Activated CD8-positive, alpha-beta T cell treated with anti-CD3 and anti-CD28 coated beads, Interleukin-2, amount 10 ng/mL, durations not matched to agents 7 days and 5 days (primary cell): ENCODE measurements at regions of chr1 and their contacts with region 1.

Region 1: DNA sequence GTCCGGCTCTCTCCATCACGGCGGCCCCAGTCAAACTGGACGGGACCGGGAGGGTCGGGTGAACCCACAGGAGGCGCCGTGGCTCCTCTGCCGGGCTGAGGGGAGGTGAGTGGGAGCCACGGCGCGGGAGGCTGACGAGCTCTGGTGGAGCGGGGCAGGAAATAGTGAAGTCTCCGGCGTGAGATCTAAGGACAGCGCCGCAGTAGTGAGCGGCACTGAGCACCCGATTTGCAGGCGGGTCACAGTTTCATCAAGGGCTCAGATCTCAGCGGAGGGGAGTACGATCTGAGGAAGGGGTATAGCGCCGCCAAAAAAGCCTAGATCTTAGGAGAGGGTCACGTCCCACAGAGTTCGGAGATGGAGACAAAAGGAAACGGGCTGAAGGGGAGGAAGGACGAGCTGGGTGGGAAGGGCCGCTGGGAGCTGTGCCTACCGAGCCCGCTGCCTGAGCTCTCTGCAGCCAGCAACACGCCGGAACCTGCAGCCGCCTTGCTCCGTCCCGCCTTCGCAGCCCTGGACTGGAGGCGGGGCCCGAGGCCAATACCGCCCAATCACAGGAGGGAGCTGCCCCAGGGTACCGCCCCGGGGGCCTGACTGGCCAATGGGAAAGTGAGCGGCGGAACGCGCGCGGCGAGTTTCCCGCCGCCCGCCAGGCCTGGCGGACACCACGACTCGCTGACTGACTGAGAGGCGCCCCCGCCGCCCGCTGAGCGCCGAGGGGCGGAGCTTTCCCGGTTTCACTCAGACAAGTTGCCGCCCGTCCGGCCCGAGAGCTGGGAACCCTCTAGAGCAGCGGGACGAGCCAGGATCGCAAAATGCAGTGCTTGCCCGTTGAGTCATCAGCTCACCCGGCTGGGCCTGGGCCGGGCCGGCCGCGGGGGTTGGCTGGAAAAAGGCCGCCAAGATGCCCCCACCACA is 1.9 kb downstream of the SFN start:
- DNase-seq: peak; percentile 96
- ATAC-seq: peak; percentile 97
- H3K4me3 Mint-ChIP-seq: peak overlapping the region; percentile 94
- H3K27ac Mint-ChIP-seq: peak overlapping the region; percentile 97
- H3K4me1 Mint-ChIP-seq: peaks cover 40% of the 10 kb centered on the region
- H3K27me3 Mint-ChIP-seq: no peaks in the 10 kb centered on the region

Region 2: DNA sequence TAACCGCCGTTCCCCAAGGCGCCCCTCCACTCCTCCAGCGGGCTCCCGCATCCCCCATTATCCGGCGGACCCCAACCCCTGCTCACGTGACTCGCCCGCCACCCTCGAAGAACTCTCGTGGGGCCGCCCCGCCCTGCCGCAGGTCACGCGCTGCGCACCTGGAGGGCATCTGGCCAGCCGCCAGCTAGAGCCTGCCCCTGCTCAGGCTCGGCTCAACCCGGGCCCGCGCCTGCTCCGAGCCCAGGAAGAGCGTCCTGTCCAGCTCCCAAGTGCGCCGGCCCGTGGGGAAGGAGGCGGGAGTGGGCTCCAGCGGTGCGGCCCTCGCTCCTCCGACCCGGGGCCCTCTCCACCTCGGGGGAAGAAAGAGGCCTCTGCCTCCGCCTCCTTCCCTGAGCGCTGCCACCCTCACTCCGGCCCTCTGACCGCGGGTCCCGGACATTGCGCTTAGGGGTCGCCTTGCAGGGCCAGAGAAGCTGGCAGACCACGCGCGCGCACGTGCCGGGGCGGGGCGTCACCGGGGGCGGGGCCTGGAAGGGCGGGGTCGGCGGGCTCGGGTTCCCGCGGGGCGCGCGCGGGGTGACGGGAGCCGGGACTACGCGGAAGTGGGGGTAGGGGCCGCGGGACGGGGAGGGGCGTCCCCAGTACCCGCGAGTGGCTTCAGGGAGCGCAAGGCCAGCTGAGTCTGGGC is 364.2 kb before region 1 on chr1:
- CTCF ChIA-PET with region 1: no interaction called
- POLR2A ChIA-PET with region 1: interaction called, 10 read pairs
- DNase-seq: peak; percentile 92
- ATAC-seq: peak; percentile 77
- H3K4me3 Mint-ChIP-seq: peak overlapping the region; percentile 86
- H3K27ac Mint-ChIP-seq: peak overlapping the region; percentile 97
- H3K4me1 Mint-ChIP-seq: peaks cover 32% of the 10 kb centered on the region
- H3K27me3 Mint-ChIP-seq: no peaks in the 10 kb centered on the region

Region 3: DNA sequence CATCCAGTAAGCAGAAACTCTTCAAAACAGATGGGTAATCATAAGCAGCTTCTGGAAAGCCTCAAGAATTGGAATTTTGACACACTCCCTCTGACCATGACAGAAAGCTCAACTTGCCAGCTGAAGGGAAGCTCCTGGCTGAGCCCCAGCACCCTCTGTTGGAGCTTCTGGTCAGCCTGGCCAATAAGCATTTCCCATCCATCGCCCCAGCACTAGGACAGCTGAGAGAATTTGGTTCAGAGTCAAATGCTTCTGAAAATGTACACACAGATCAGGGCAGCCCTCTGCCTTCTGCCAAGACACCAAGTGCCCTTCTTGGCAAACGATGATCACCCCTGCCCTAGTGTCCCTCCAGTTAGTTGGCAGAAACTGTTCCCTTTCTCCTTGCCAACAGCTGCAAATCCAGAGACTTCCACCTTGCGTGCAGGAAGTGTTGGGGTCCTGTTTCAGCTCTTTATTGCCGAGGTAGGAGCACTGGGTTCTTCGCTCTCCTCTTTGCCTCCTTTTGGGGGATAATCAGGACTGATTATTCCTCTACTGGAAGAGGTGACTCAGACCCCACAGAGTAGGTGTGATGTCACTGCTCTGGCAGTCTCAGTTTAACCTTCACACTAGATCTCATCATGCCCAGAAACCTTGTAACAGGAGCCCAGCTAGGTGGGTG is 65.3 kb before region 1 on chr1:
- CTCF ChIA-PET with region 1: interaction called, 4 read pairs
- POLR2A ChIA-PET with region 1: interaction called, 26 read pairs
- DNase-seq: peak; percentile 54
- ATAC-seq: peak; percentile 76
- H3K4me3 Mint-ChIP-seq: peak overlapping the region; percentile 74
- H3K27ac Mint-ChIP-seq: peak overlapping the region; percentile 90
- H3K4me1 Mint-ChIP-seq: peaks cover 51% of the 10 kb centered on the region
- H3K27me3 Mint-ChIP-seq: no peaks in the 10 kb centered on the region

Region 4: GRCh38 chr1:26820784-26821269 is 44.0 kb before region 1 on chr1:
- CTCF ChIA-PET with region 1: interaction called, 10 read pairs
- POLR2A ChIA-PET with region 1: interaction called, 9 read pairs
- DNase-seq: peak; percentile 64
- ATAC-seq: peak; percentile 93
- H3K4me3 Mint-ChIP-seq: peak overlapping the region; percentile 70
- H3K27ac Mint-ChIP-seq: peak overlapping the region; percentile 80
- H3K4me1 Mint-ChIP-seq: peaks cover 25% of the 10 kb centered on the region
- H3K27me3 Mint-ChIP-seq: no peaks in the 10 kb centered on the region

Region 5: DNA sequence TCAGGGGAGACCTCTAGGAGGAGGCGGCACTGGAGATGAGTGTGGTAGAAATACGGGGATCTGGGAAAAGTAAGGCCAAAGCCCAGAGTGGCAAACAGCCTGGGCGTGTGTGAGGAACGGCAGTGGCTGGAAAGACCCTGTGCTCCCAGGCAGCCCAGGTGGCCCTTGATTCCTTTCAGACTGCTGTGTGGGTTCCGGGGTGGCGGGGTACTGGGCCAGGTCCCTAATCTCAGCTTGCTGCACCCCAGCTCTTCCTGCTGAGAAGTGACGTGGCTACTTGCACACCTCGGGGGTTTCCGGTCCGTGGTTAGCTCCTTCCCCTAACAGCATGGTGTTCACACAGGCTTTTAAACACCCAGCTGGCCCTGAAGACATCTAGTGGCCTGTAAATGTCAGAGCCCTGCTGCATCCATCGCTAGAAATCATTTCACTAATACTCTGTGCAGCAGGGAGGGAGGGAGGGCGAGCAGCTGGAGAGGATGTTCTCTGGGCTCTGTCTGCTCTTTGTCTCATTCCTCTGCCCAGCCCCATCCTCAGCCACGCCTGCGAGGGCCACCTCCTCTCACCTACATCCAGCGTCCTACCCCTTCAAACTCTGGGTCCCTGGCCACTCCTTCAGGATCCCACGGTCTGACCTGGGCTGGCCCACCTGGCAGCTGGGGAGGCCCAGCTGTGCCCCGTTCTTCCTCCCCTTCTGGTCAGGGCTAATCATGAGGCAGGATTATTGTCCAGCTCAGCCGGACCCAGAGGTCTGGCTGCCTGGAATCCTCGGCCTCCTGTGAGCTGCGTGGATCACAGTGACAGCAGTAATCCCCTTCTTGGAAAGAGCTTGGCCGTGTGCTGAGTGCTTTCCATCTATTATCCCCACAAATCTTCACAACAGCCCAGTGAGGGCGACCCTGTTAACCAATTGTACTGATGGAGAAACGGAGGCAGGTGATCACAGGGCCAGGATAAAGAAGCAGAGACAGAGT is 31.1 kb before region 1 on chr1:
- CTCF ChIA-PET with region 1: interaction called, 27 read pairs
- POLR2A ChIA-PET with region 1: interaction called, 33 read pairs
- DNase-seq: peak; percentile 97
- ATAC-seq: peak; percentile 97
- H3K4me3 Mint-ChIP-seq: peak overlapping the region; percentile 69
- H3K27ac Mint-ChIP-seq: peak overlapping the region; percentile 98
- H3K4me1 Mint-ChIP-seq: peaks cover 65% of the 10 kb centered on the region
- H3K27me3 Mint-ChIP-seq: no peaks in the 10 kb centered on the region

Region 6: GRCh38 chr1:26889551-26890466 is 24.9 kb after region 1 on chr1 and contains the start of gene GPN2:
- CTCF ChIA-PET with region 1: interaction called, 40 read pairs
- POLR2A ChIA-PET with region 1: interaction called, 29 read pairs
- DNase-seq: peak; percentile 86
- ATAC-seq: peak; percentile 97
- H3K4me3 Mint-ChIP-seq: peak within 1 kb of the TSS; percentile 96
- H3K27ac Mint-ChIP-seq: peak within 1 kb of the TSS; percentile 96
- H3K4me1 Mint-ChIP-seq: peaks cover 32% of the 10 kb centered on the region
- H3K27me3 Mint-ChIP-seq: no peaks in the 10 kb centered on the region
- total RNA-seq, gene GPN2: 28.9 to 32.8 TPM

Region 7: GRCh38 chr1:26921540-26922430 is 56.9 kb after region 1 on chr1 and contains the start of gene NUDC:
- CTCF ChIA-PET with region 1: no interaction called
- POLR2A ChIA-PET with region 1: interaction called, 11 read pairs
- DNase-seq: peak; percentile 98
- ATAC-seq: peak; percentile 95
- H3K4me3 Mint-ChIP-seq: peak within 1 kb of the TSS; percentile 98
- H3K27ac Mint-ChIP-seq: peak within 1 kb of the TSS; percentile 99
- H3K4me1 Mint-ChIP-seq: peaks cover 36% of the 10 kb centered on the region
- H3K27me3 Mint-ChIP-seq: no peaks in the 10 kb centered on the region
- total RNA-seq, gene NUDC: 85.1 to 91.2 TPM

Region 8: DNA sequence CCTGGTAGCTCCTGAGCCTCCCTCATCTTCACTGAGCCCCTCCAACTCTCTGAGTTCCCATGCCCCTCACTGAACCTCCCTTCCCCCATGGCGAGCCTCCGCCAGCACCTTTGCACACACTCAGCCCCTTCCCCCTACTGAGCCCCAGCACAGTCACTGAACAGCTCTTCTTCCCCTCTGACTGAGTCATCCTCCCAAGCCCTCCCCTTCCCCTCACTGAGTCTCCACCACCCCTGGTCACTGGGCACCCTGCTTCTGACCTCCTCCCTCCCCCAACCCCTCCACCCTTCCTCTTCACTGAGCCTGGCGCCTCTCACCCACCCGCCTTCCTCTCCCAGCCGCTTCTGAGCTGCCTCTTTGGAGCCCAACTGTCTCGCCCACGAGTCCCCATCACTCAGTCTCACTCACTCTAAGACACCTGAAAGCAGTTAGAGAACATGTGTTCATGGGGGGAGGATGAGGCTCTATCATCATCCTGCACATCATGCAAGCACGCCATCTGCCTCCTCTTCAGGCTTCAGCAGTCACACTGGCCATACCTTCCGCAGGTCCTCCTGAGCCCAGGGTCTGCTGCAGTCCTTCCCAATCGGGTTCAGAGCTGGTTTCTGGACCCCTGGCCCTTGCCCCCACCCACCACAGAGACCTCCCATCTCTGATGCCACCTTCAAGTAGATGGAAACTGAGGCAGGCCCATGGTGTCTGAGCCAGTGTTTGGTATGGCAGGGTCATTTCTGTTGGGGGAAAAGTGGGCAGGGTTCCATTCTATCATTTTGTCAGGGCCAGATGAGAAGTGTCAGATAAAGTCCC is 126.6 kb after region 1 on chr1:
- CTCF ChIA-PET with region 1: no interaction called
- POLR2A ChIA-PET with region 1: no interaction called
- DNase-seq: no peak
- ATAC-seq: no peak
- H3K4me3 Mint-ChIP-seq: no peak overlapping the region
- H3K27ac Mint-ChIP-seq: no peak overlapping the region
- H3K4me1 Mint-ChIP-seq: peaks cover 11% of the 10 kb centered on the region
- H3K27me3 Mint-ChIP-seq: peaks cover 60% of the 10 kb centered on the region